PC-9 (cell line): ENCODE measurements at regions of chr9 and their contacts with region 1.

Region 1: GRCh38 chr9:112705768-112706427 is 12.0 kb downstream of the INIP start:
- DNase-seq: no peak
- H3K4me3 ChIP-seq: no peak overlapping the region
- H3K27ac ChIP-seq: no peak overlapping the region
- H3K4me1 ChIP-seq: no peaks in the 10 kb centered on the region
- H3K27me3 ChIP-seq: no peaks in the 10 kb centered on the region
- CTCF ChIP-seq: no peak

Region 2: GRCh38 chr9:112387115-112387514 is 318.8 kb before region 1 on chr9:
- CTCF ChIA-PET with region 1: no interaction called
- POLR2A ChIA-PET with region 1: no interaction called
- intact Hi-C with region 1: no loop called
- DNase-seq: no peak
- H3K4me3 ChIP-seq: no peak overlapping the region
- H3K27ac ChIP-seq: no peak overlapping the region
- H3K4me1 ChIP-seq: peaks cover 9% of the 10 kb centered on the region; the same call in 1 of the 2 replicates
- H3K27me3 ChIP-seq: no peaks in the 10 kb centered on the region
- CTCF ChIP-seq: no peak

Region 3: GRCh38 chr9:112725961-112726360 is 20.1 kb after region 1 on chr9:
- CTCF ChIA-PET with region 1: no interaction called
- POLR2A ChIA-PET with region 1: no interaction called
- intact Hi-C with region 1: no loop called
- DNase-seq: no peak
- H3K4me3 ChIP-seq: no peak overlapping the region
- H3K27ac ChIP-seq: no peak overlapping the region
- H3K4me1 ChIP-seq: no peaks in the 10 kb centered on the region
- H3K27me3 ChIP-seq: no peaks in the 10 kb centered on the region
- CTCF ChIP-seq: no peak

Region 4: DNA sequence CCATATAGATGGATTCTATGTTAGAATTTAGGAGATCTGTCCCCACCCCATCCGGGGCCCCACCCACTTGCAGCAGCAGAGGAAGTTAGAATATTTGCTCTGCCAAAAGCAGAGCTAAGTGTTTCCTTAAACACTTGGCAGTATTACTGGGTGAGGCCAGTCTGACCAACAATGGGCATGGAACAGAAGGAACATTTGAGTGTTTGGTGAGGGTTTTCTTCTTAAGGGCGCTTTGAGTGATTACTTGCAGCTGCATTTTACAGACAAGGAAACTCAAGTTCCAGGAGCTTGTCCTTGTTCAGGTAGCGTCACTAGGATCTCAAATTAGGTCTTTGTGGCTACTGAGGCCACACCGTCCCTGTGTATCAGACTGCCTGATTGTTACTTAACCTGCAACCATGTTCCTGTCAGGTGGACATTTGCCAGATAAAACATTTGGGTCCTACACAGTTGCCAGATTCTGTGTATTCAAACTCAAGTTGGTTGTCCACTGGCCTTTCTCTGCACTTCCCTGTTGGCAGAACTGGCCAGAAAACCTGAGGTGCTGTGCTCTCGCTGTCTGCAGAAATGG is 125.5 kb after region 1 on chr9:
- CTCF ChIA-PET with region 1: interaction called, 6 read pairs
- POLR2A ChIA-PET with region 1: interaction called, 15 read pairs
- intact Hi-C with region 1: no loop called
- DNase-seq: peak in 1 of 2 experiments; percentile 13
- H3K4me3 ChIP-seq: no peak overlapping the region
- H3K27ac ChIP-seq: no peak overlapping the region
- H3K4me1 ChIP-seq: no peaks in the 10 kb centered on the region
- H3K27me3 ChIP-seq: no peaks in the 10 kb centered on the region
- CTCF ChIP-seq: no peak

Region 5: GRCh38 chr9:114238891-114239875 is 1533.3 kb after region 1 on chr9:
- CTCF ChIA-PET with region 1: no interaction called
- POLR2A ChIA-PET with region 1: no interaction called
- intact Hi-C with region 1: no loop called
- DNase-seq: no peak
- H3K4me3 ChIP-seq: no peak overlapping the region
- H3K27ac ChIP-seq: no peak overlapping the region
- H3K4me1 ChIP-seq: no peaks in the 10 kb centered on the region
- H3K27me3 ChIP-seq: peaks cover 9% of the 10 kb centered on the region
- CTCF ChIP-seq: no peak